GM12878 (cell line): ENCODE measurements at regions of chr1 and their contacts with region 1.

Region 1: GRCh38 chr1:243708210-243708609 is 141.8 kb downstream of the AKT3 start:
- DNase-seq: no peak
- ATAC-seq: no peak
- H3K4me3 ChIP-seq: no peak overlapping the region
- H3K27ac ChIP-seq: no peak overlapping the region
- H3K4me1 ChIP-seq: no peaks in the 10 kb centered on the region
- H3K27me3 ChIP-seq: no peaks in the 10 kb centered on the region
- CTCF ChIP-seq: peak in 1 of 3 experiments; percentile 28; a peak in 2 of 6 replicates
- EP300 ChIP-seq: no peak
- POLR2A ChIP-seq: no peak
- RAD21 ChIP-seq: peak; percentile 57

Region 2: DNA sequence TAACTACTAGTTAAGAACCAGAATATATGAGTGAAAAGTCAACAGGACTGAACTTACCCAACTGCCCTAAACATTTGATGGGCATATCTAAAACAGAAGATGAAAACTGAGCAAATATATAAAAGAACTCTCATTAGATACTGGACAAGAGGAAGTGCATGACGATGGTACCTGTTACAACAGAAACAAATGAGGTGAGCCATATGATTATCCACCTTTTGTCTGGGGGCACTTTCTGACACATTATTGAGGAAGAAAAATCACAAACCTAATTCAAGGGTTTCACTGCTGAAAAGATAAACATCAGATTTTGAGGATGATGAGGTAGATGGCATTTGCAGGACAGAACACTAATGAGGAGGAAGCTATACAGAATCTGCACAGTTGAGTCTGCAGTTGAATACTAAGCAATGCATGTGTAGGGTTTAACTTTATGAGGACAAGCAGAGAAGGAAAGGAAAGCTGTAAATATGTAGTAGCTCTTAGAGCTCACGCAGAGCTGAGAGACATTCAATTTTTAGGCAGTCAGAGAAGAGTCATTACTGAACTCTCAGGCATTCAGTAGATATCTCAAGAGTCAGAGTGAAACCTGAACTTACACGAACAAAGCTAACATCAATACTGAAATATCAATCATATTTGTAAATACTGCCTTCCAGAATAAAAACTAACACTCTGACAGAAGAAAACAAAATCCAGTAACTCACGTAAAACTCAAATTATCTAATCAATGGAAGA is 120.2 kb before region 1 on chr1:
- CTCF ChIA-PET with region 1: no interaction called
- POLR2A ChIA-PET with region 1: no interaction called
- RAD21 ChIA-PET with region 1: no interaction called
- SMC1A ChIA-PET with region 1: no interaction called
- in situ Hi-C with region 1: no loop called
- intact Hi-C with region 1: no loop called
- DNase-seq: peak; percentile 60
- ATAC-seq: peak; percentile 90
- H3K4me3 ChIP-seq: no peak overlapping the region
- H3K27ac ChIP-seq: peak overlapping the region; percentile 65
- H3K4me1 ChIP-seq: peaks cover 19% of the 10 kb centered on the region
- H3K27me3 ChIP-seq: no peaks in the 10 kb centered on the region
- CTCF ChIP-seq: no peak
- EP300 ChIP-seq: no peak
- POLR2A ChIP-seq: no peak
- RAD21 ChIP-seq: no peak

Region 3: DNA sequence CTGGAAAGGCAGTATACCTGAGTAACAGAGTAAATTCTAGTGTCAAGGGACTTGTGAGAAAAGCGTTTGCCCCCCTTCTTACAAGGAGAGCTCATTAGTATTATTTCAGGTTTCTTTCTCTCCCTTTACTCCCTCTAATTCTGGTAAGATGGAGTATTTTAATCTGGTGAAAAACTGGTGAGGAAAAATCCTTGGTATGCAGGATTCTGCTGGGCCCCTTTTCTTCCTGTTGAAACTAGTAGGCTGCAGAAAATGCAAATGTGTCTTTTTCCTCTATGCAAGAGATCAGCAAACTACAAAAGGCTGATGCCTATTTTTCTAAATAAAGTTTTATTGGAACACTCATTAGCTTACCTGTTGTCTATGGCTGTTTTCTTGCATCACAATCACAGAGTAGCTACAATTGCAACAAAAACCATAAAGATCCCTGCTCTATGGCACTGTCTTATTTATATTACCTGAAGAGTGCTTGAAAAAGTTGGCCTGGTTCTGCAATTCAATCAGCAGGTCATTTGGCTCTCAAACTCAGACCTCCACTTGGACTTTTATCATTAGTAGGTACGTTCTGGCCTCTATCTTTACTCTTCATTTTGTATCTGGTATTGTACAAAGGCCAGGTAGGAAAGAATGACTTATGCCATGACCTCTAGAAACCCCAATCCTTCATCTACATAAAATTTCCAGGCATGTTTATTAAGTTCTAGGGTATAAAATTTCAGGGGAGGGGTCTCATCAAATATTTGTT is 32.2 kb after region 1 on chr1:
- CTCF ChIA-PET with region 1: interaction called, 14 read pairs
- POLR2A ChIA-PET with region 1: no interaction called
- RAD21 ChIA-PET with region 1: interaction called, 6 read pairs
- SMC1A ChIA-PET with region 1: interaction called, 15 read pairs
- in situ Hi-C with region 1: no loop called
- intact Hi-C with region 1: no loop called
- DNase-seq: no peak
- ATAC-seq: no peak
- H3K4me3 ChIP-seq: no peak overlapping the region
- H3K27ac ChIP-seq: no peak overlapping the region
- H3K4me1 ChIP-seq: no peaks in the 10 kb centered on the region
- H3K27me3 ChIP-seq: no peaks in the 10 kb centered on the region
- CTCF ChIP-seq: no peak
- EP300 ChIP-seq: no peak
- POLR2A ChIP-seq: no peak
- RAD21 ChIP-seq: no peak

Region 4: GRCh38 chr1:243946946-243947345 is 238.7 kb after region 1 on chr1:
- CTCF ChIA-PET with region 1: no interaction called
- POLR2A ChIA-PET with region 1: no interaction called
- RAD21 ChIA-PET with region 1: no interaction called
- SMC1A ChIA-PET with region 1: no interaction called
- in situ Hi-C with region 1: no loop called
- intact Hi-C with region 1: loop called (anchors 10 kb)
- DNase-seq: no peak
- ATAC-seq: peak; percentile 57
- H3K4me3 ChIP-seq: no peak overlapping the region
- H3K27ac ChIP-seq: no peak overlapping the region
- H3K4me1 ChIP-seq: no peaks in the 10 kb centered on the region
- H3K27me3 ChIP-seq: no peaks in the 10 kb centered on the region
- CTCF ChIP-seq: peak; percentile 26 to 45 (median 37); a peak in 5 of 6 replicates
- EP300 ChIP-seq: no peak
- POLR2A ChIP-seq: no peak
- RAD21 ChIP-seq: peak; percentile 39; the same call in 1 of the 2 replicates